Sigmoid colon (tissue), 7 donors: ENCODE measurements at regions of chr9 and their contacts with region 1.

Region 1: DNA sequence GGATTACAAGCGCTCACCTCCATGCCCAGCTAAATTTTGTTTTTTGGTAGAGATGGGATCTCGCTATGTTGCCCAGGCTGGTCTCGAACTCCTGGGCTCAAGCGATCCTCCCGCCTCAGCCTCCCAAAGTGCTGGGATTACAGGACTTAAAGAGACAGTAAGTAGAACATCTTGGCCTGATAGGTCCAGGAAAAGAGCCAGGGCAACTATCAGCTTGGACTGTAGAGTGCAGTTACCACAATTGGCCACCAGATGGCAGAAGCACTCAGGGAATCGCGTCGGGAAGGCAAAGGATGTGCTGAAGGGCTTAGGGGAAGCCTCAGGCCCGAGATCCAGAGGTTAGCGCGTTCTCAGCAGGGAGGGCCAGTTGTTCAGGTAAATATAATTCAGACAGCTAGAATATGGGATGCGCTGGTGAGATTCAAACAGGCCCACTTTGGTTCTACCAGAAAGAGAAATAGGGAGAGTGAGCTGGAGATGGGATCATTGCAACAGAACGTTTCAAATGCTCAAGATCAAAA is 21.5 kb downstream of the C9orf57 start:
- DNase-seq: peak; percentile 84
- H3K4me3 ChIP-seq: no peak overlapping the region
- H3K27ac ChIP-seq: no peak overlapping the region
- H3K4me1 ChIP-seq: peaks cover 0 to 8% (median 3%) of the 10 kb centered on the region in 4 donors
- H3K27me3 ChIP-seq: no peaks in the 10 kb centered on the region
- CTCF ChIP-seq: peak; percentile 75 to 98 (median 93)
- EP300 ChIP-seq: no peak
- POLR2A ChIP-seq: no peak

Region 2: DNA sequence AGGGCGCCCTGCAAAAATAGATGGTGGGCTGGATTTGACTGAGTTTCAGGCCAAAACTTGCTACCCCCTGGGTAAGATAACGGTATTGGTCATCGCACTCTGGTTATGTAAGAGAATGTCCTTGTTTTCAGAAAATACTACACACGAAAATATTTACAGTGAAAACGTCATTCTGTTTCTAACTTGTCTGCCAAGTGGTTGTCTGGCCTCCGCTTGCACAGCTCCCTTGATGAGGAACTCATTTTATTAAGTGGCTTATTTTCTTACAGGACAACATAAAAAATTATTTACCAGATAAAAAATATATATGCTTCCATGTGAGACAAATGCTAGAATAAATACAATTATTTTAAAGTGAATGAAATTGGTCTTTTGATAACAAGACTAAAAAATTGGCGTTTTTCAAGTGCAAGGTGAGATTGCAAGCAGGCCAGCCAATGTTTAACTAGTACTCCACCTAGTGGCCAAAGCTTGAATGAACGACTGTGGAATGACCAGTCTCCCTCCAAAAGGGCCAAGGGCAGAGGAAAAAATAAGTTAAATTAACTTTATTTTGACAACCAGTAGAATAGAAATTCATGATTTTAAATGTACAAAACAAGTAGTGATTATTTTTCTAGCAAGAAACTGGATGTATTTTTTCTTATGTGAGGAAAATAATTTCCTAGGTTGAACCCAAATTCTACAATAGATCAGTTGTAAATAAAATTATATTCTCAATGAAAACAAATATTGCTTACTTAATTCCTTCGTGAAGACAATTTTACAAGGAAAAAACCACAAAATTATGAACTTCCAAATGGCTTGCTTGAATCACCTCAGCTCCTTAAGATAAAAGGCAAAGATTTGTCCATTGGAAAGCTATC is 232.9 kb after region 1 on chr9:
- intact Hi-C with region 1: loop called (anchors 1 kb)
- DNase-seq: no peak
- H3K4me3 ChIP-seq: no peak overlapping the region
- H3K27ac ChIP-seq: no peak overlapping the region
- H3K4me1 ChIP-seq: no peaks in the 10 kb centered on the region
- H3K27me3 ChIP-seq: no peaks in the 10 kb centered on the region
- CTCF ChIP-seq: peak; percentile 40 to 87 (median 78)
- EP300 ChIP-seq: no peak
- POLR2A ChIP-seq: no peak